Activated CD4-positive, alpha-beta memory T cell treated with anti-CD3 and anti-CD28 coated beads for 36 hours (primary cell): ENCODE measurements at regions of chr2 and their contacts with region 1.

Region 1: DNA sequence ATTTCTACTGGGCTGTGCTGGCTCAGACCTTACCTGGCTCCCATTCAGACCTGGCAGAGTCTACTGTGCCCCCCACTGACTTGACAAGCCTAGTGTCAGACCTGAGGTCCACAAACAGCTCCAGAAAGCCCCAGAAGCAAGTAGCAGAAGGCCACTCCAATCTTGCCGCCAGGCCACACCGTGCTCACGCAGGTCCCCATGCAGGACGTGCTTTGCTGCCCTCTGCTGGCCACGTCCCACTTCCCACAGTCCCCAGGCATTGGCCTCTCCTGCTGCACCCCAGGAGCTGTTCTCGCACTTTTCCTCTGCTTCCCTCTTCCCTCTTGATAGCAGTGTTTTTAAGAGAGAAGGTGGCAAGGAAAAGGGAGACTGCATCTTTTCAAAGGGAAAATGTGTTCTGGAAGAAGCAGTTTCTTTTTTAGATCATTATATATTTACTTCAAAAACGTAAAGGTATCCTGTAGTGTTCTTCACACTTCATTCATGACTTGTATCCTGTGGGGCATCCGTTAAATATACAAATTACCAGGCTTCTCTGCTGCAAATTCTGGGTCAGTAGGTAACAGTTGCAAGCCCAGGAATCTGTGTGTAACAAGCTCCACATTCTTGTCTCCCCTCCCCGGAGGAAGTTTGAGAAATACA is 81.4 kb upstream of the PAPOLG start:
- DNase-seq: peak; percentile 87
- H3K4me3 Mint-ChIP-seq: no peak overlapping the region
- H3K27ac Mint-ChIP-seq: no peak overlapping the region
- H3K4me1 Mint-ChIP-seq: peaks cover 2% of the 10 kb centered on the region
- H3K27me3 Mint-ChIP-seq: peaks cover 2% of the 10 kb centered on the region

Region 2: GRCh38 chr2:60546756-60547420 is 127.8 kb before region 1 on chr2:
- CTCF ChIA-PET with region 1: no interaction called
- POLR2A ChIA-PET with region 1: no interaction called
- intact Hi-C with region 1: no loop called
- DNase-seq: no peak
- H3K4me3 Mint-ChIP-seq: no peak overlapping the region
- H3K27ac Mint-ChIP-seq: no peak overlapping the region
- H3K4me1 Mint-ChIP-seq: peaks cover 19% of the 10 kb centered on the region
- H3K27me3 Mint-ChIP-seq: peaks cover 66% of the 10 kb centered on the region

Region 3: DNA sequence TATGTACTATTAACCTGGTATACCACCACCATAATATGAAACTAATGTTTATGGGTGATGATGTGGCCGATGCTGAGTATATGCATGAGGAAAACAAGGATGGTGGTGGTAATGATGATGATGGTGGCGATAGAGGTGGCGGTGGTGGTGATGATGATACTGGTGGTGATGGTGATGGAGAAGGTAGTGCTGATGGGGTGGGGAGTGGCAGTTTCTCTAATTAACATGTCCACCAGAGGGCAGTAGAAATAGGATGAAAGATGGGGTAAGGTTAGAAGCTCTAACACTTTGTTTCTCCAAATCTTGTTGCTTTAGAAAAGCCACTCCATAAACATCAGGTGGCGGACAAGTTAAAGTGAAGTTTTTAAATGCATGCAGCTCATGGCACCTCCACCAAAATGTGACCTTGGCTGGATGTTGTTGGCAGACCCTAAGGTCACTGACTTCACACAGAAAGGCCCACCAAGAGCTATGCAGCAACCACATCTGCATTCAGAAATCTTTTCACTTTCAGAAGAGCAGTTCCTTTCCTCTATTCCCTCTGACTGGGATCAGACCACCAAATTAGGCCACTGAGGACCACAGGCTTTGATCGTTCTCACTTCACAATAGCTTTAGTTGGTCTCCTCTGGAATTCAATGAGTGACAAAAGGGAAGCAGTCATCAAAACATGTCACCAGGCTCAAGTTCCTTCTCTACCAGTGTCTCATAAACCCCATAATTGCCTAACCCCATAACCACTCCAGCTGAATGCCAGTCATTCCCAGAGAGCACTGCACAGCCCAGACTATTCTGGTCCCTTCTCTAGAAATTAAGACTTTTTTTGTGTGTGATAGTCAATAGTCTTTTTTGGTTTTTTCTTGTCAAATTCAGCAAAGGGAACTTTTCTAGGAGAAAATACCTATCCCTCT is 113.7 kb before region 1 on chr2:
- CTCF ChIA-PET with region 1: interaction called, 3 read pairs
- POLR2A ChIA-PET with region 1: no interaction called
- intact Hi-C with region 1: loop called (anchors 2 kb)
- DNase-seq: no peak
- H3K4me3 Mint-ChIP-seq: no peak overlapping the region
- H3K27ac Mint-ChIP-seq: no peak overlapping the region
- H3K4me1 Mint-ChIP-seq: peaks cover 10% of the 10 kb centered on the region
- H3K27me3 Mint-ChIP-seq: peaks cover 58% of the 10 kb centered on the region

Region 4: GRCh38 chr2:60641811-60642788 is 32.5 kb before region 1 on chr2:
- CTCF ChIA-PET with region 1: interaction called, 15 read pairs
- POLR2A ChIA-PET with region 1: no interaction called
- intact Hi-C with region 1: no loop called
- DNase-seq: peak; percentile 17
- H3K4me3 Mint-ChIP-seq: no peak overlapping the region
- H3K27ac Mint-ChIP-seq: no peak overlapping the region
- H3K4me1 Mint-ChIP-seq: no peaks in the 10 kb centered on the region
- H3K27me3 Mint-ChIP-seq: no peaks in the 10 kb centered on the region

Region 5: GRCh38 chr2:60659026-60659425 is 15.6 kb before region 1 on chr2:
- CTCF ChIA-PET with region 1: interaction called, 12 read pairs
- POLR2A ChIA-PET with region 1: no interaction called
- intact Hi-C with region 1: no loop called
- DNase-seq: no peak
- H3K4me3 Mint-ChIP-seq: no peak overlapping the region
- H3K27ac Mint-ChIP-seq: no peak overlapping the region
- H3K4me1 Mint-ChIP-seq: no peaks in the 10 kb centered on the region
- H3K27me3 Mint-ChIP-seq: no peaks in the 10 kb centered on the region

Region 6: GRCh38 chr2:60707750-60708371 is 33.2 kb after region 1 on chr2:
- CTCF ChIA-PET with region 1: interaction called, 10 read pairs
- POLR2A ChIA-PET with region 1: no interaction called
- intact Hi-C with region 1: no loop called
- DNase-seq: no peak
- H3K4me3 Mint-ChIP-seq: no peak overlapping the region
- H3K27ac Mint-ChIP-seq: no peak overlapping the region
- H3K4me1 Mint-ChIP-seq: no peaks in the 10 kb centered on the region
- H3K27me3 Mint-ChIP-seq: peaks cover 1% of the 10 kb centered on the region